Gastrocnemius medialis (tissue), 4 donors: ENCODE measurements at regions of chr17 and their contacts with region 1.

Region 1: DNA sequence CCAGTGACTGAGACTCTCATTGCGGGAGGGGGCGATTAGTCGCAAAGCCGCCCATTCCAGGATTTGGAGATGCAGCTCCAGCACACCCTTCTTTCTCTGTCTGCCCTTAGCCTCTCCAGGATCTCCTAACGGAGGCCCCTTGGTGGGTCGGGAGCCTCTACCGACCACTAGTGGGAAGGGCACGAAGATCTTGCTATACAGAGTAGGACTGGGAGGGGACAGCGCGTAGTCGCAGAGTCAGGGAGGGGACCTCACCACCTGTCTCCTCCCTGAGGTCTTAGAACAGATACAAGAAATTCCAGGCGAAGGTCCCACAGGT is 588 bp upstream of the SMTNL2 start:
- DNase-seq: peak in 1 of 2 donors; percentile 84
- ATAC-seq: peak; percentile 31 to 56
- H3K4me3 ChIP-seq: peak overlapping the region; percentile 63 to 87 (median 73)
- H3K27ac ChIP-seq: peak overlapping the region; percentile 90 to 100 (median 98)
- H3K4me1 ChIP-seq: peaks cover 23 to 24% of the 10 kb centered on the region in 2 donors
- H3K27me3 ChIP-seq: no peaks in the 10 kb centered on the region
- CTCF ChIP-seq: peak; percentile 49 to 69 (median 63)
- POLR2A ChIP-seq: no peak

Region 2: GRCh38 chr17:4420692-4421131 is 163.0 kb before region 1 on chr17:
- in situ Hi-C with region 1: no loop called
- intact Hi-C with region 1: no loop called
- DNase-seq: peak; percentile 36 to 48
- ATAC-seq: peak; percentile 87 to 97
- H3K4me3 ChIP-seq: no peak overlapping the region
- H3K27ac ChIP-seq: no peak overlapping the region
- H3K4me1 ChIP-seq: no peaks in the 10 kb centered on the region
- H3K27me3 ChIP-seq: no peaks in the 10 kb centered on the region
- CTCF ChIP-seq: peak; percentile 65 to 86 (median 79)
- POLR2A ChIP-seq: no peak

Region 3: DNA sequence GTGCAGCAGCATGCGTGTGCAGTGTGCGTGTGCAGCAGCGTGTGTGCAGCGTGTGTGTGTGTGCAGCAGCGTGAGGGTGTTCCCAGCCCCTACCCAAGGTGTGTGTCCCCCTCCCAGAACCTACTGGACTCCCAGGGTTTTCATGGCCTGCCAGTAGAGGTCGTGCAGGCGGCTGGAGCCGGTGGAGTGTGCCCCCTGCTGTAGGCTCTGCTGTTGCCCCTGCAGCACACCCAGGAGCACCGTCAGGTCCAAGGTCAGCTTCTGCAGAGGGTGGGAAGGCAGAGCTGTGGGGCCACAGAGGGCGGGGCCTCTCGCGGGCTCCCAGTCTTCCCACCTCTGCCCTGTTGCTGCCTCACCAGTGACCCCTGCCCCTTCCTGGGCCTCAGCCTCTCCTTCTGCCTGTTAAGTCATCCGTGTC is 43.5 kb before region 1 on chr17:
- in situ Hi-C with region 1: no loop called
- intact Hi-C with region 1: no loop called
- DNase-seq: no peak
- ATAC-seq: no peak
- H3K4me3 ChIP-seq: no peak overlapping the region
- H3K27ac ChIP-seq: peak overlapping the region; percentile 57 to 79 (median 70)
- H3K4me1 ChIP-seq: peaks cover 41 to 52% of the 10 kb centered on the region in 2 donors
- H3K27me3 ChIP-seq: no peaks in the 10 kb centered on the region
- CTCF ChIP-seq: peak in 2 of 5 experiments; percentile 8 to 33
- POLR2A ChIP-seq: no peak

Region 4: GRCh38 chr17:4616476-4616875 is 32.7 kb after region 1 on chr17:
- in situ Hi-C with region 1: no loop called
- intact Hi-C with region 1: loop called (anchors 5 kb)
- DNase-seq: no peak
- ATAC-seq: peak in 1 of 2 donors; percentile 1
- H3K4me3 ChIP-seq: no peak overlapping the region
- H3K27ac ChIP-seq: peak overlapping the region; percentile 76 to 100 (median 92)
- H3K4me1 ChIP-seq: peaks cover 13 to 33% of the 10 kb centered on the region in 2 donors
- H3K27me3 ChIP-seq: no peaks in the 10 kb centered on the region
- CTCF ChIP-seq: no peak
- POLR2A ChIP-seq: no peak